CD8-positive, alpha-beta memory T cell (primary cell): ENCODE measurements at regions of chr12 and their contacts with region 1.

Region 1: GRCh38 chr12:47397664-47398281 is 308.1 kb downstream of the RPAP3 start:
- DNase-seq: peak; percentile 14 to 69 (median 56)
- H3K4me3 ChIP-seq: peak overlapping the region; percentile 17
- H3K4me3 Mint-ChIP-seq: peak overlapping the region in 6 of 7 donors; percentile 60 to 84 (median 72)
- H3K27ac ChIP-seq: no peak overlapping the region
- H3K27ac Mint-ChIP-seq: peak overlapping the region; percentile 76 to 99 (median 95)
- H3K4me1 ChIP-seq: peaks cover 38% of the 10 kb centered on the region
- H3K4me1 Mint-ChIP-seq: peaks cover 46 to 62% (median 56%) of the 10 kb centered on the region in 3 donors
- H3K27me3 ChIP-seq: no peaks in the 10 kb centered on the region
- H3K27me3 Mint-ChIP-seq: no peaks in the 10 kb centered on the region

Region 2: GRCh38 chr12:47071241-47071852 is 326.4 kb before region 1 on chr12:
- CTCF ChIA-PET with region 1: interaction called, 38 read pairs
- POLR2A ChIA-PET with region 1: interaction called, 5 read pairs
- DNase-seq: peak in 1 of 5 donors; percentile 31
- H3K4me3 ChIP-seq: no peak overlapping the region
- H3K4me3 Mint-ChIP-seq: no peak overlapping the region
- H3K27ac ChIP-seq: no peak overlapping the region
- H3K27ac Mint-ChIP-seq: peak overlapping the region in 1 of 8 donors; percentile 53
- H3K4me1 ChIP-seq: peaks cover under 1% of the 10 kb centered on the region
- H3K4me1 Mint-ChIP-seq: peaks cover 5 to 10% (median 10%) of the 10 kb centered on the region in 3 donors
- H3K27me3 ChIP-seq: no peaks in the 10 kb centered on the region
- H3K27me3 Mint-ChIP-seq: no peaks in the 10 kb centered on the region

Region 3: GRCh38 chr12:47207340-47207717 is 190.4 kb before region 1 on chr12:
- CTCF ChIA-PET with region 1: interaction called, 17 read pairs
- POLR2A ChIA-PET with region 1: interaction called, 13 read pairs
- DNase-seq: peak; percentile 34 to 60 (median 50)
- H3K4me3 ChIP-seq: peak overlapping the region; percentile 44
- H3K4me3 Mint-ChIP-seq: peak overlapping the region; percentile 58 to 95 (median 78)
- H3K27ac ChIP-seq: peak overlapping the region; percentile 21
- H3K27ac Mint-ChIP-seq: peak overlapping the region; percentile 86 to 98 (median 94)
- H3K4me1 ChIP-seq: peaks cover 67% of the 10 kb centered on the region
- H3K4me1 Mint-ChIP-seq: peaks cover 77 to 90% (median 84%) of the 10 kb centered on the region in 3 donors
- H3K27me3 ChIP-seq: no peaks in the 10 kb centered on the region
- H3K27me3 Mint-ChIP-seq: peaks cover 0 to 2% of the 10 kb centered on the region in 2 donors

Region 4: DNA sequence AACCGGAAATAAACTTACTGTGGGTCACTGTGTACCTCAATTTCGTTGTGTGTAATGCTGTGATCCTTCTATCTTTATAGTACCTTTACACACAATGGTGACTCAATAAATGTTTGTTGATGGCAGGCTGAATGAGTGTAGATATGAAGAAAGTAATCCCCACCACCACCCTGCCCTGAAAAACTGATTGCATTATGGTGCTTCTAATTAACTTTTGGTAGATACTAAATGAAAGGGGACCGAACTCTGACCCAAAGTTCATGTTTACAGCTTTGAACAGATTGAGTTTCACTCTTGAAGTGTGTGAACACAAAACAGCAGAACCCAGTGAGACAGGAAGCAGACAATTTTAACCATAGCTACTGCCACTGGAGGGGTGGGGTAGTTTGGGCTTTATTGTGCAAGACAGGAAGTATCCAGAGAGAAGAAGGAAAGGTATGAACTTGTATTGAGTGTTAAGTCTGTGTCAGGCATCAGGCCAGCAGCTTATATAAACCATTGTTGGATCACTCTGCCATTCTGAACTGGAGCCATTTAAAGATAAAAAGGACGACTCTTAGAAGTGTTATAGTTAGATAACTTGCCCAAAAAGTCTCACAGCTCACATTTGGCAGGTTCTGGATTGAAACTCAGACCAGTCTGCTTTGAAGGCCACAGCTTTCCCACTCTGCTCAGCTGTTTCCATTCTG is 121.0 kb before region 1 on chr12:
- CTCF ChIA-PET with region 1: interaction called, 15 read pairs
- POLR2A ChIA-PET with region 1: no interaction called
- DNase-seq: peak; percentile 30 to 82 (median 81)
- H3K4me3 ChIP-seq: peak overlapping the region; percentile 37
- H3K4me3 Mint-ChIP-seq: peak overlapping the region; percentile 11 to 79 (median 72)
- H3K27ac ChIP-seq: peak overlapping the region; percentile 62
- H3K27ac Mint-ChIP-seq: peak overlapping the region; percentile 87 to 96 (median 92)
- H3K4me1 ChIP-seq: peaks cover 61% of the 10 kb centered on the region
- H3K4me1 Mint-ChIP-seq: peaks cover 38 to 62% (median 57%) of the 10 kb centered on the region in 3 donors
- H3K27me3 ChIP-seq: no peaks in the 10 kb centered on the region
- H3K27me3 Mint-ChIP-seq: no peaks in the 10 kb centered on the region

Region 5: DNA sequence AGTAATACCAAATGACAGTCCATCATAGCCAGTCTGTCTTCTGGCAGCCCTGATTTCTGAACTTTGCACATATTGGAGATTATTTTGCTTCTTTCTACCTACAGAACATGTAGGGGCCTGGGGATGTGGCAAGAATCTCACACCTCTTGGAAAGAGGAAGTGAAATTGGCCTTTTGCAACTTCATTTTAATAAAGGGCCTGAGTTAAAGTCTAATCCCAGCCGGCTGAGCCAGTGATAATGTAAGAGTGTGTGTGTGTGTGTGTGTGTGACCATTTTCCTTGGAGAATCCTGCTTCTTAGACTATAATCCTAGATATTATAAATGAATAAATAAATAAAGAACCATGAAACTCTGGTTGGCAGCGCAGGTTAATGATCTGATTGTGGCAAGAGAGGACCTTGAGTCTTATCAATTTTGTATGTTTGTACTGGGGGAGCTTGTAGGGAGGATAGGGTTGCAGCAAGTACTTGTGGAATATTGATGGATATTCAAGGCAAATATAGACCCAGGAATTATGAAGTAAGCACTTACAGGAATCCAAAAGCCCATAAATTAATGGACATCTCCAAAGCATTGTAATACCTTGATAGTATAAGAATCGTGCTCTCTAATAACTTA is 84.9 kb before region 1 on chr12:
- CTCF ChIA-PET with region 1: interaction called, 31 read pairs
- POLR2A ChIA-PET with region 1: interaction called, 3 read pairs
- DNase-seq: no peak
- H3K4me3 ChIP-seq: no peak overlapping the region
- H3K4me3 Mint-ChIP-seq: no peak overlapping the region
- H3K27ac ChIP-seq: no peak overlapping the region
- H3K27ac Mint-ChIP-seq: peak overlapping the region in 1 of 8 donors; percentile 47
- H3K4me1 ChIP-seq: peaks cover 12% of the 10 kb centered on the region
- H3K4me1 Mint-ChIP-seq: peaks cover 36 to 62% (median 58%) of the 10 kb centered on the region in 3 donors
- H3K27me3 ChIP-seq: no peaks in the 10 kb centered on the region
- H3K27me3 Mint-ChIP-seq: peaks cover 0 to 2% of the 10 kb centered on the region in 2 donors

Region 6: GRCh38 chr12:47408171-47408871 is 10.5 kb after region 1 on chr12:
- CTCF ChIA-PET with region 1: interaction called, 10 read pairs
- POLR2A ChIA-PET with region 1: no interaction called
- DNase-seq: peak in 3 of 5 donors; percentile 17 to 58 (median 38)
- H3K4me3 ChIP-seq: no peak overlapping the region
- H3K4me3 Mint-ChIP-seq: peak overlapping the region in 3 of 7 donors; percentile 25 to 61 (median 27)
- H3K27ac ChIP-seq: no peak overlapping the region
- H3K27ac Mint-ChIP-seq: peak overlapping the region in 3 of 8 donors; percentile 28 to 65 (median 43)
- H3K4me1 ChIP-seq: peaks cover 60% of the 10 kb centered on the region
- H3K4me1 Mint-ChIP-seq: peaks cover 20 to 57% (median 43%) of the 10 kb centered on the region in 3 donors
- H3K27me3 ChIP-seq: no peaks in the 10 kb centered on the region
- H3K27me3 Mint-ChIP-seq: no peaks in the 10 kb centered on the region

Region 7: GRCh38 chr12:47920913-47921312 is 523.1 kb after region 1 on chr12:
- CTCF ChIA-PET with region 1: no interaction called
- POLR2A ChIA-PET with region 1: no interaction called
- DNase-seq: no peak
- H3K4me3 ChIP-seq: no peak overlapping the region
- H3K4me3 Mint-ChIP-seq: no peak overlapping the region
- H3K27ac ChIP-seq: no peak overlapping the region
- H3K27ac Mint-ChIP-seq: no peak overlapping the region
- H3K4me1 ChIP-seq: no peaks in the 10 kb centered on the region
- H3K4me1 Mint-ChIP-seq: no peaks in the 10 kb centered on the region
- H3K27me3 ChIP-seq: no peaks in the 10 kb centered on the region
- H3K27me3 Mint-ChIP-seq: peaks cover 12 to 40% of the 10 kb centered on the region in 2 donors